ENCODE measurements at regions of chr17 and their contacts with region 1.

Region 1: DNA sequence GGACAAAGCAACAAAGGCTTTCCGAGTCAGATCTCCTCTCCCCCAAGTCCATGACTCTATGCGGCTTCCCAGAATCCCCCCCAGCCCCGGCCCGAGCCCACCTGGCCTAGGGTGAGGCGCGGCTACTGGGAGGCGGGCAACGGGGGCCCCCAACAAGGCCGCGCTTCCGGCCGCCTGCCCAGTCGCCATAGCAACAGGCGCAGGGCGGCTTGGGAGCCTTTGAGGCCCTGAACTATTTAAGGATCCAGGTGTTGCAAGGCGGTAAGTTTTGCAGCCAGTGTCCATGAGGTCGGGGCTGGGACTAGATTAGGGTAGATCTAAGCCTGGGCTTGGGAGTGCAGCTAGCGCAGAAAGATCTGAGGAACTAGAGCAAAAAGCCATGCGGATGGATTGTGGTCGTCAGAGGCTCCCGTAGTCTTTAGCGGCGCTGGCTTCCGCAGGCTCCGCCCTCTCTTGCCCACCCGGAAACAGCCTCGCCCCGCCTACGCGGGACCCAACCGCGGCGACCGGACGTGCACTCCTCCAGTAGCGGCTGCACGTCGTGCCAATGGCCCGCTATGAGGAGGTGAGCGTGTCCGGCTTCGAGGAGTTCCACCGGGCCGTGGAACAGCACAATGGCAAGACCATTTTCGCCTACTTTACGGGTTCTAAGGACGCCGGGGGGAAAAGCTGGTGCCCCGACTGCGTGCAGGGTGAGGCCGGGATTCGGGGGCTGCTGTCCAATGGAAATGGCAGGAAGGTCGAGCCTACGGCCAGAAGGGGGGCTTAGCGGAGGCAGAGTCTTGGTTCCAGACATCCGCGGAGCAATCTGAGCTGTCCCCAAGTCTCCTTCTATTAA is at the starts of genes KIAA0753 and TXNDC17:
- H3K4me3 Mint-ChIP-seq: peak within 1 kb of the TSS; percentile 93
- H3K27ac Mint-ChIP-seq: peak within 1 kb of the TSS; percentile 89
- H3K4me1 Mint-ChIP-seq: peaks cover 48% of the 10 kb centered on the region
- H3K27me3 Mint-ChIP-seq: peaks cover 3% of the 10 kb centered on the region

Region 2: DNA sequence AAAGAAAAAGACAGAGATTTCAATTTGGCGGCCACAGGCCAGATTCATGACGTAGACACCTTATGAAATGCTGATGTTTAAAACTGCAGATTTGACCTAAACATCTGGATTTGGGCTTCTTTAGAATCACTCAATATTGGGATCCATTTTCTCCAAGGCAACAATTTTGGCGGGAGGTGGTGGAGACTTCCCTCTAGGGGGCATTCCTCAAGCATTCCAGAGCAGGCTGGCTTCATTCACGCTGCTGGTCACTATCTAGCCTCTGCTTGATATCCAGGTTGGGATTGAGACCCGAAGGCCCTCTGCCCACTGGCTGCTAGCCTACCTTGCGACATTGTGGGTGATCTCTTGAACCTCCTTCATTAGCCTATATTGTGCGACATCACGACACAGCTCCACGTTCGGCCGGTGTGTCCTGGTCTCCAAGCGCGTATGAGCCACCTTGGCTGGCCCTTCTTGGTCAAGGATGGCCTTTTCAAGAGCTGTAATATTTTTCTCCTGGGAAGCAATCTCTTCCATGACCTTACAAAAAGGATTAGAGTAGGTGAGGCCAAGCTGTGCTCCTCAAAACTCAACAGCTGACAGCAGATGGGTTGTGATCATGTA is 159.8 kb after region 1 on chr17:
- intact Hi-C with region 1: no loop called
- H3K4me3 Mint-ChIP-seq: no peak overlapping the region
- H3K27ac Mint-ChIP-seq: no peak overlapping the region
- H3K4me1 Mint-ChIP-seq: no peaks in the 10 kb centered on the region
- H3K27me3 Mint-ChIP-seq: peaks cover 10% of the 10 kb centered on the region

Region 3: GRCh38 chr17:7014261-7014994 is 373.7 kb after region 1 on chr17:
- intact Hi-C with region 1: loop called (anchors 10 kb)
- H3K4me3 Mint-ChIP-seq: peak overlapping the region; percentile 94
- H3K27ac Mint-ChIP-seq: peak overlapping the region; percentile 100
- H3K4me1 Mint-ChIP-seq: peaks cover 66% of the 10 kb centered on the region
- H3K27me3 Mint-ChIP-seq: peaks cover 12% of the 10 kb centered on the region